ENCODE measurements at regions of chrX and their contacts with region 1.

Region 1: DNA sequence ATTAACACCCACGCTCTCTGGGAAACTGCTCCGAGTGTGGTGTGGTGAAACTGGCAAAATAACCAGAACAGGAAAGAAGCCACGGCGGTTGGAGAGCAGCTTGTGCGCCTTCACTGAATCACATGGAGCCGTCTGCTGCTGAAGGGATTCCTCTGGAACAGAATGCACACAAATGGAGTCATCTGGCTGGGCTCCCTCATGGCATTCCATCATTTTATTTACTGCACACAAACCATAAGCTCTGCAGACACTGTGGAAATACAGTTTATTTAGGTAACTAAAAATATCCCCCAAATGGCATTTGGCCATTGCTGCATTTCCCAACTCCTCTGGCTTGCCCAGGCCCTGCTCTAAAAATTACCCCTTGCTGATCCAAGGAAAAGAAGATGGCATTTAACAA is 187.0 kb upstream of the S100G start:
- DNase-seq: no peak

Region 2: GRCh38 chrX:15404401-15405096 is 1058.4 kb before region 1 on chrX:
- intact Hi-C with region 1: no loop called
- DNase-seq: no peak

Region 3: DNA sequence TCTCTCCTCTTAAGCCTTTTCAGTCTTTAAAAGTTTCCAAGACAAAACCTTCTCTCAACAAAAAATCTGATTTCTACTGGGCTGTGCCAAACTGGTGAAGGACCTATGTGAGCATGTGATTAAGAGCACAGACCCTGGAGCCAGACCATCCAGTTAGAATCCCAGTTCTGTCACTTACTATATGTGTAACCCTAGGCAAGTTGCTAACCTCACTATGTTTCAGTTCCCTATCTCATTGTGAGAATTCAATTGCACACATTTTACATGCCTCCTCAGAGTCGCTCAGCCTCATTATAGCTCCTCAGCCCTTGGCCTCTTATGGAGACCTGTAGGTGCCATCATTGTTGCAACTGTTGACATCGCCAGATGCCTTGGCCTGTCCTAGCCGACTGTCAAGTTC is 1024.6 kb before region 1 on chrX:
- intact Hi-C with region 1: loop called in 1 of 2 experiments (anchors 5 kb)
- DNase-seq: no peak